AG04450 (cell line): ENCODE measurements at regions of chr12 and their contacts with region 1.

Region 1: GRCh38 chr12:47870175-47870781 is 34.5 kb downstream of the VDR start:
- DNase-seq: no peak
- H3K4me3 ChIP-seq: no peak overlapping the region
- H3K27ac ChIP-seq: no peak overlapping the region
- H3K27me3 ChIP-seq: no peaks in the 10 kb centered on the region
- CTCF ChIP-seq: peak; percentile 41

Region 2: DNA sequence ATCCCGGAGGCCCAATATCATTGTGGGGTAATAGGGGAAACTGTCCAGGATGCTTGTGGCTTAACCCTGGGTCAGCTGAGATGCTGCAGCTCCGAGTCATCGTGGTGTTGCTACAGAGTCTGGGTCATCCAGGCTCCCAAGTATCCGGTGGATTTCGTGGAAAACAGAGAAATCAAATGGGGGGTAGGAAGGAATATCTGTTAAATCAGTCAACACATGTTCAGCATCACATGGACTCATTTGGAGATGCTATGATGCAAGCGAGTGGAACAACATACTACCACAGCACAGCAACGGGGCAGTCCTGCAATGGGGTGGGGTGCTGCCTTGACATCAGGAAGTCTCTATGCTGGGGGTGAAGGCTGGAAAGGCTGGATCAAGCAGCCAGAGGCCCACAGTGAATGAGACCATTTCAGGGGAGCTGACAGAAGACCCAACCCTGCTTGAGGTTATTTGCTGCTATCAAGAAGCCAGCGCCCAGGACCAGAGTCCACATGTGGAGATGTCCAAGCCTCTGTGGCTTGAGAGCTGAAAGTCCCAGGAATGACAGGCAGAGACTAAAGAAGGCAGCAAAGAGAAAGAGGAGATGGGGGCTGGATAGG is 11.6 kb after region 1 on chr12:
- CTCF ChIA-PET with region 1: interaction called, 12 read pairs
- POLR2A ChIA-PET with region 1: interaction called, 9 read pairs
- DNase-seq: peak; percentile 96
- H3K4me3 ChIP-seq: 0 out of 2 replicates have a peak overlapping the region, but pooled peaks have one; percentile 2
- H3K27ac ChIP-seq: peak overlapping the region; percentile 96
- H3K27me3 ChIP-seq: no peaks in the 10 kb centered on the region
- CTCF ChIP-seq: no peak

Region 3: DNA sequence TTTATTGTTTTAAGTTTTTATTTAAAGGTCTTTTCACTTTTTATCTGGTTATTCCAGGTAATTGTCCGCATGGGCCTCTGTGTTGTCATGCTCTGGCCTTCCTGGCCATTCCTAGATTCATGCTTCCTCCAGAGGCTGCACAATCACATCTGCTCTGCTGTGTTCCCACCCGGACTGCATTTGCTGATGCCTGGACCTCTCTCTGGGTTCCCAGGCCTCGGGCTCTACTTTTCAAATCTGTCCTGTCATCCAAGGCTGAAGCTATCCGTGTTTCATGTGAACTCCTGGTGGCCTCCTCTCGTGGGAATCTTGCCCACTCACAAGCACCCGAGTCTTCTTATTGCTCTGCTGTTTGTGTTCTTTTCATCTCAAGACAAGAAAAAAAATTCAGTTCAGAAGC is 50.6 kb after region 1 on chr12:
- CTCF ChIA-PET with region 1: no interaction called
- POLR2A ChIA-PET with region 1: no interaction called
- DNase-seq: no peak
- H3K4me3 ChIP-seq: no peak overlapping the region
- H3K27ac ChIP-seq: no peak overlapping the region
- H3K27me3 ChIP-seq: peaks cover 36% of the 10 kb centered on the region
- CTCF ChIP-seq: no peak

Region 4: GRCh38 chr12:47949441-47950308 is 79.4 kb after region 1 on chr12:
- CTCF ChIA-PET with region 1: interaction called, 13 read pairs
- POLR2A ChIA-PET with region 1: no interaction called
- DNase-seq: peak; percentile 55
- H3K4me3 ChIP-seq: no peak overlapping the region
- H3K27ac ChIP-seq: no peak overlapping the region
- H3K27me3 ChIP-seq: peaks cover 23% of the 10 kb centered on the region
- CTCF ChIP-seq: peak; percentile 92